H1 (cell line): ENCODE measurements at regions of chr17 and their contacts with region 1.

Region 1: GRCh38 chr17:32341857-32342602 is at the start of gene C17orf75:
- DNase-seq: peak in 1 of 2 experiments; percentile 90
- H3K4me3 ChIP-seq: peak within 1 kb of the TSS; percentile 52 to 89 (median 80)
- H3K27ac ChIP-seq: peak within 1 kb of the TSS; percentile 63
- H3K4me1 ChIP-seq: peaks cover 0 to 4% (median under 1%) of the 10 kb centered on the region in 4 experiments; a peak in 2 of 7 replicates
- H3K27me3 ChIP-seq: no peaks in the 10 kb centered on the region
- CTCF ChIP-seq: no peak
- EP300 ChIP-seq: peak in 1 of 2 experiments; percentile 86; a peak in 1 of 3 replicates
- POLR2A ChIP-seq: peak; percentile 53 to 85
- RAD21 ChIP-seq: no peak; a peak in 1 of 4 replicates
- total RNA-seq, gene C17orf75: 35.4 and 42.6 TPM in 2 replicates

Region 2: DNA sequence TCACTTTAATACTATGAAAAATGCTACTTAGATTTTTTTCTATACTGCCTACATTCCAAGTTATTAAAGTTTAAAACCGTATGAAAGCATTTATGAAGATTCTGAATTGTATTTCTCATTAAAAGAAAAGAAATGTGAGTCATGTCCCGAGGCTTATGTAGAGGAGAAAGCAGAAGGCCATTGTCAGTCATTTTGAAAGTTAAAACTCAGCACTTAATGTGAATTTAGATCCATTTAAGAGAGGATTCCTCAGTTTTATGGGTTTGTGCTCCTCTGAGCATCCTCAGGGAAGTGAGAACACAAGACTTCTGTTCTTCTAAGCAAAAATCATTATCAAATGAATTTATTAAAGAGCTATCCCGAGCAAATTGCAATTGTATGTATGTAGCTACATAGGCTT is 11.9 kb before region 1 on chr17:
- CTCF ChIA-PET with region 1: interaction called, 16 read pairs
- POLR2A ChIA-PET with region 1: interaction called, 8 read pairs
- DNase-seq: no peak
- H3K4me3 ChIP-seq: no peak overlapping the region
- H3K27ac ChIP-seq: no peak overlapping the region
- H3K4me1 ChIP-seq: no peaks in the 10 kb centered on the region
- H3K27me3 ChIP-seq: no peaks in the 10 kb centered on the region
- CTCF ChIP-seq: no peak
- EP300 ChIP-seq: no peak
- POLR2A ChIP-seq: no peak
- RAD21 ChIP-seq: no peak